ENCODE measurements at regions of chr13 and their contacts with region 1.

Region 1: GRCh38 chr13:46679369-46680120 is 117.4 kb downstream of the ESD start:
- DNase-seq: peak; percentile 64 to 69
- ATAC-seq: peak; percentile 91 to 96 (median 93)
- H3K4me3 ChIP-seq: peak overlapping the region; percentile 26
- H3K4me3 Mint-ChIP-seq: no peak overlapping the region
- H3K27ac ChIP-seq: peak overlapping the region; percentile 96
- H3K27ac Mint-ChIP-seq: no peak overlapping the region
- H3K4me1 ChIP-seq: peaks cover 21% of the 10 kb centered on the region
- H3K4me1 Mint-ChIP-seq: peaks cover 9 to 22% of the 10 kb centered on the region in 2 donors
- H3K27me3 ChIP-seq: no peaks in the 10 kb centered on the region
- H3K27me3 Mint-ChIP-seq: no peaks in the 10 kb centered on the region
- CTCF ChIP-seq: no peak

Region 2: DNA sequence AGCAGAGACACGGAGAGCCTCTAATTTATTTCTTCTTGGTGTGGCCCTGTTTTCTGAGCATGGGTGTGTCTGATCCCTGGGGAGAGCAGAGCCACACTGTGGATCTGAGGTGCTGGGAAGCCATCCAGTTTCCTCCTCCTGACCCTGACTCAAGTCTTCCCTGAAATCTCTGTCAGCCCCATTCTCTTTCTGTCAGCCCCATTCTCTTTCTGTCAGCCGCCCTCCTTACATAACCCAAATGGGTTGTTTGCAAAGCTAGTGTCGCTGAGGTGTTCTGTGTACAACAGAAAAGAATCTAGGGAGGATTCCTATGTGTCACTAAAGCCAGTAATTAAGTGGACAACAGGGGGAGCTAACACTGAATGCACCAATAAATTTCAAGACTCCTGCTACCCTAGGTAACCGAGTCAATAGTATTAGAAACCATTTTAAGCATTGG is 76.4 kb before region 1 on chr13:
- intact Hi-C with region 1: loop called (anchors 5 kb)
- DNase-seq: no peak
- ATAC-seq: no peak
- H3K4me3 ChIP-seq: no peak overlapping the region
- H3K4me3 Mint-ChIP-seq: no peak overlapping the region
- H3K27ac ChIP-seq: no peak overlapping the region
- H3K27ac Mint-ChIP-seq: no peak overlapping the region
- H3K4me1 ChIP-seq: peaks cover 29% of the 10 kb centered on the region
- H3K4me1 Mint-ChIP-seq: peaks cover 78 to 84% of the 10 kb centered on the region in 2 donors
- H3K27me3 ChIP-seq: no peaks in the 10 kb centered on the region
- H3K27me3 Mint-ChIP-seq: no peaks in the 10 kb centered on the region
- CTCF ChIP-seq: no peak

Region 3: DNA sequence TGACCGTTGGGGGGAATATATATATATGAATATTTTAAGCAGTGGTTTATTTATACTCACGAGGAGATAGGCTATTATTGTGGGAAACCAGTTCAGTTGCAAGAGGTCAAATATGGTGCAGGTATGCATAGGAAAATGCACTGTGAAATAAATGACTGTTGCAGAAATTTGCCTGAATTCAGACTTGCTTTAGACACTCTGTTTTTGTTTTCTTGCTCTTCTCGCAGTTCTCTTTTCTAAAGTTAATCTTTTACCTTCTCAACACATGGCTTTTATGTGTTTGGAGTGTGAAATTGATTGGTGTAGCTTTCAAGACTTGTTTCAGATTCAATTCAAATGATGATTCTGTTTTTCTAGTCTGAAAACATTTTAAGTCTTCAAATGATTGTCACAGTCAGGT is 16.9 kb before region 1 on chr13:
- intact Hi-C with region 1: loop called (anchors 2 kb)
- DNase-seq: no peak
- ATAC-seq: no peak
- H3K4me3 ChIP-seq: no peak overlapping the region
- H3K4me3 Mint-ChIP-seq: no peak overlapping the region
- H3K27ac ChIP-seq: no peak overlapping the region
- H3K27ac Mint-ChIP-seq: peak overlapping the region; percentile 82 to 95
- H3K4me1 ChIP-seq: peaks cover 15% of the 10 kb centered on the region
- H3K4me1 Mint-ChIP-seq: peaks cover 49 to 51% of the 10 kb centered on the region in 2 donors
- H3K27me3 ChIP-seq: no peaks in the 10 kb centered on the region
- H3K27me3 Mint-ChIP-seq: no peaks in the 10 kb centered on the region
- CTCF ChIP-seq: no peak

Region 4: GRCh38 chr13:46668302-46668720 is 11.2 kb before region 1 on chr13:
- intact Hi-C with region 1: loop called (anchors 1 kb)
- DNase-seq: peak in 1 of 2 donors; percentile 30
- ATAC-seq: peak; percentile 30 to 46 (median 38)
- H3K4me3 ChIP-seq: peak overlapping the region; percentile 50
- H3K4me3 Mint-ChIP-seq: peak overlapping the region; percentile 91
- H3K27ac ChIP-seq: peak overlapping the region; percentile 96
- H3K27ac Mint-ChIP-seq: peak overlapping the region; percentile 91 to 95
- H3K4me1 ChIP-seq: peaks cover 22% of the 10 kb centered on the region
- H3K4me1 Mint-ChIP-seq: peaks cover 48 to 57% of the 10 kb centered on the region in 2 donors
- H3K27me3 ChIP-seq: no peaks in the 10 kb centered on the region
- H3K27me3 Mint-ChIP-seq: no peaks in the 10 kb centered on the region
- CTCF ChIP-seq: no peak

Region 5: DNA sequence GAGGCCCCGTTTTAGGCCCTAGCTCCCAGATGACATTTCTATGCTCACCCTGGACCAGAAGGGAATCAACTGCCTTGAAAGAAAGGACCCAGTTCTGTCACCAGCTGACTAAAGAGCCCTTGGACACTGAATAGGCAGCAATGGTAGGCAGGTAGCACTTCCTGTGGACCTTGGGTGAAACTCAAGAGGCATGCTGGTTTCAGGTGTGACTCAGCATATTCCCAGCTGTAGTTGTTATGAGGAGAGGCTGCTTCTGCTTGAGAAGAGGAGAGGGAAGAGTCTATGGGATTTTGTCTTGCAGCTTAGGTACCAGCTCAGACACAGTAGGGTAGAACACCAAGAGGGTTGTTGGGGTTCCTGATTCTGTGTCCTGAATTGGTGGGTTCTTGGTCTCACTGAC is 255.2 kb after region 1 on chr13:
- intact Hi-C with region 1: no loop called
- DNase-seq: no peak
- ATAC-seq: no peak
- H3K4me3 ChIP-seq: no peak overlapping the region
- H3K4me3 Mint-ChIP-seq: no peak overlapping the region
- H3K27ac ChIP-seq: no peak overlapping the region
- H3K27ac Mint-ChIP-seq: no peak overlapping the region
- H3K4me1 ChIP-seq: no peaks in the 10 kb centered on the region
- H3K4me1 Mint-ChIP-seq: no peaks in the 10 kb centered on the region
- H3K27me3 ChIP-seq: no peaks in the 10 kb centered on the region
- H3K27me3 Mint-ChIP-seq: peaks cover 4 to 14% of the 10 kb centered on the region in 2 donors
- CTCF ChIP-seq: no peak